Testis (tissue), 5 donors: ENCODE measurements at regions of chr6 and their contacts with region 1.

Region 1: GRCh38 chr6:30013291-30013922 is 47.7 kb upstream of the POLR1H start:
- DNase-seq: no peak
- H3K4me3 ChIP-seq: no peak overlapping the region
- H3K27ac ChIP-seq: no peak overlapping the region
- H3K4me1 ChIP-seq: no peaks in the 10 kb centered on the region
- H3K27me3 ChIP-seq: no peaks in the 10 kb centered on the region
- CTCF ChIP-seq: peak in 2 of 3 experiments; percentile 17 to 89
- POLR2A ChIP-seq: no peak

Region 2: DNA sequence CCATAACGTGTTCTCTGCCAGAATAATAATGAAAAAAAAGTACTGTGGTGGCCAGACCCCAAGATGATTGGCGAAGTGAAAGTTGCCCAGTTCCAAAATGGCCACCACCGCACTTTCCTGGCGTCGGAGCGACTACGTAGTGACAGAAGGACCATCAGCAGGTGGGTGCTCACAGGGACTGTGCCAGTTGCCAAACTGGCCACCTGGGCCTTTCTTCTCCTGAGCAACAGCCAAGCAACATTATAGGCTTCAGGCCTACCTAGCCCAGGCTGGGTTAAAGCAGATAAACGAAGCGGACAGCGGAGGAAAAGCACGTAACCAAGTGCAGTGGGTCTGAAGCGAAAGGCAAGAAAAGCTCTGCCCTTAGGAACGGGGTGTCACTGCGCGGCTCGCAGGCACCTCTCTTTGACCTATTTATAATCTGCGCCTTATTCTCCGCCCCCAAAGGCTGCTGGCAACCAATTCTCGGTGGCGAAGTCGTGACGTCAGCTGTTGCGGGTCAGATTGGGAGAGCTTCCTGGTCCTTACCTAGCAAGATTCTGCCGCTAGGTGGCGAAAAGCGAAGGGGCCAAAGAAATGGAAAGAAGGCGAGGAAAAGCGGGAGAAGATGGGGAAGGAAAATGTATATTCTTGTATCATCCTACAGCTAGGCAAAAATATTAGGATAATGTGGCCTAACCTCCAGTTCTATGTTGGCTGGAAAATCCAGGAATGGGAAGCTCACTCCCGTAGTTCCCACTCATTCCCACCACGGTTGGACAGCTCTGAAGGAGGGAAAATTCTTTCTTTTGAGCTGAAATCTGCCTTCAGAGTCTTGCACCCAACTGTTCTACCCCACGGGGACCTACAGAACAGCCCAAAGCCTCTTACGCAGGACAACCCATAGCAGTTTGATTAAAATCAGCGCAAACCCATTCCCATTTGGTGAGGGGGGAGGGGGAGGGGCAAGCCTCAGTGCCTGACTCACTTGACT is 363.4 kb before region 1 on chr6:
- intact Hi-C with region 1: no loop called
- DNase-seq: peak; percentile 100
- H3K4me3 ChIP-seq: peak overlapping the region; percentile 58 to 65
- H3K27ac ChIP-seq: peak overlapping the region; percentile 93 to 96
- H3K4me1 ChIP-seq: no peaks in the 10 kb centered on the region
- H3K27me3 ChIP-seq: no peaks in the 10 kb centered on the region
- CTCF ChIP-seq: peak; percentile 94 to 98 (median 97)
- POLR2A ChIP-seq: peak; percentile 84

Region 3: DNA sequence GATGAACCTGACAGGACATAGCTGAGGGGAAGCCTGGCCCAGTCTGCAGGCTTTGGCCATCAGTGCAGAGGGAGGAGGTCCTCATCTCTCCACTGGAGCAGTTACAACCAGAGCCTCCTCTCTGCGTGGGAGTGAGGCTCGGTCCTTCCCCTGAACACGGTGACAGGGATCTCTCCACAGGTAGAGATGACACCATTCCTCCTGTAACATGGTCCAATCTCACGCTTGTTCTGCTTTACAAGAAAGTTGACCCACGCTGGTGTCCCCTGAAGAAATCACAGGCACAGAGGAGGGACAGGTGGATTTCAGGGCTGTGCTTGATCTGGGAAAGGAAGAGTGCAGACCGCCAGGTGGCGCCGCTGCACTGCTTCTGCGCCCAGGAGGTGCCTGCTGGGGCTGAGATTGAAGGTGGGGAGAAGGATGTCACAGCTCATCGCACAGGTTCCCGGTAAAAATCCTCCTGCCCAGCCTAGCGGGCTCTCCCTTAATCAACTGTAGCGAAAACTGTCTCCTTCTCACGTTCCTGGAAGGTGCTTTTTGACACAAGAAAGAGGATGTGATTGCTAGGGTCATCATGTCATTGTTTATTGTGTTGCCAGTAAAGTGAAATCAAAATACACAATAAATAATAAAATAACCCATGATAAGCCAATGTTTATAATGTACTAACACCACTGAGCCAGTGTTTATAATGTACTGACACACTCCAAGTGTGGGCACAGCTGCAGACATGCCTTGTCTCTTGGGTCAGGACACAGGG is 165.4 kb before region 1 on chr6:
- intact Hi-C with region 1: loop called (anchors 5 kb)
- DNase-seq: peak; percentile 83
- H3K4me3 ChIP-seq: no peak overlapping the region
- H3K27ac ChIP-seq: no peak overlapping the region
- H3K4me1 ChIP-seq: no peaks in the 10 kb centered on the region
- H3K27me3 ChIP-seq: no peaks in the 10 kb centered on the region
- CTCF ChIP-seq: peak; percentile 85 to 89 (median 87)
- POLR2A ChIP-seq: no peak

Region 4: GRCh38 chr6:30130887-30131862 is 117.8 kb after region 1 on chr6:
- intact Hi-C with region 1: no loop called
- DNase-seq: peak; percentile 87
- H3K4me3 ChIP-seq: no peak overlapping the region
- H3K27ac ChIP-seq: no peak overlapping the region
- H3K4me1 ChIP-seq: peaks cover 15% of the 10 kb centered on the region
- H3K27me3 ChIP-seq: no peaks in the 10 kb centered on the region
- CTCF ChIP-seq: peak; percentile 78 to 95 (median 86)
- POLR2A ChIP-seq: no peak